ENCODE measurements at regions of chr3 and their contacts with region 1.

Region 1: GRCh38 chr3:127735767-127736704 is 63.3 kb downstream of the ABTB1 start:
- DNase-seq: peak; percentile 13 to 24
- ATAC-seq: peak in 1 of 2 experiments; percentile 41; a peak in 1 of 6 replicates
- H3K4me3 ChIP-seq: no peak overlapping the region
- H3K27ac ChIP-seq: peak overlapping the region; percentile 88 to 90
- H3K4me1 ChIP-seq: peaks cover 63% of the 10 kb centered on the region
- CTCF ChIP-seq: no peak
- EP300 ChIP-seq: no peak
- POLR2A ChIP-seq: no peak
- RAD21 ChIP-seq: no peak

Region 2: GRCh38 chr3:127750226-127751031 is 14.4 kb after region 1 on chr3:
- CTCF ChIA-PET with region 1: interaction called, 14 read pairs
- POLR2A ChIA-PET with region 1: no interaction called
- DNase-seq: no peak
- ATAC-seq: no peak
- H3K4me3 ChIP-seq: no peak overlapping the region
- H3K27ac ChIP-seq: peak overlapping the region; percentile 97 to 100
- H3K4me1 ChIP-seq: peaks cover 54% of the 10 kb centered on the region
- CTCF ChIP-seq: no peak
- EP300 ChIP-seq: no peak
- POLR2A ChIP-seq: no peak
- RAD21 ChIP-seq: no peak